ENCODE measurements at regions of chrX and their contacts with region 1.

Region 1: DNA sequence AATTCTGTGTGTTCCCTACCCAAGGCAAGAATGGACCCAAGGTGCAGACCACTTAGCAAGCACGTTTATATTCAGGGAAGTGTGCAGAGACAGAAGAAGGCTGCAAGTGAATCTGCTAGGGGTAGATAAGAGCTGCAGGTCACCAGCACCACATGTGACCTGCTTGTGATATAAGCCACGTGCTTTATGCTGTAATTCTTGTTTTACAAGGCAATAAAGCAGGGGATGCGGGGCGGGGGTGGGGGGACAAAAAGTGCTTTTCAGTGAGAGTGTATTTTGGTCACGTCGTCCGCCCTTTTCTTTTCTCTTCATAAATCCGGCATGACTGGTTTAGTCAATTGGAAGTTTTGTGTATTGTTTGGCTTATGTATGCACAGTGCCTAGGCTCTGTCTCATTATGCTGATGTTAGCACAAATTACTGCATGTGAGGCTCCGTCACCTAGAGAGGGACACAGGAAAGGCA is 192.7 kb downstream of the RBMX2 start:
- DNase-seq: no peak
- ATAC-seq: no peak

Region 2: GRCh38 chrX:130340271-130340670 is 254.2 kb before region 1 on chrX:
- intact Hi-C with region 1: no loop called
- DNase-seq: no peak
- ATAC-seq: no peak

Region 3: DNA sequence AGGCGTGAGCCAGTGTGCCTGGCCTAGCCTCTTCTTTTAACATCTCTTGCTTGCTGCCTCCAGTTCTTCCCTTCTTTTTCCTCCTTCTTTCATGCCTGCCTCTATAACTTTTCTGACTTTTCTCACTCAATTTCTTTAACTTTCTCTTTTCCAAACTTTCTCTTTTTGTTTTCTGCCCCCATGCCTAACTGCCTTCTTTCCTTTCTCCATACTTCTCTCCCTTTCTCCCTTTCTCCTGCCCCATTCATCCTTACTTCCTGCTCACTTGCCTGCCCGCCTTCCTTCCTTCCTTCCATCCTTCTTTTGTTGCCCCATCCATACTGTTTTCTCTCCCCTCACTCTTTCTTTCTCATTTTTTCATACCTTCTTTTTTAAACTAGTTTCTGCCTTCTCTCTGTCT is 87.5 kb before region 1 on chrX:
- intact Hi-C with region 1: no loop called
- DNase-seq: no peak
- ATAC-seq: no peak

Region 4: GRCh38 chrX:130836447-130836846 is 242.0 kb after region 1 on chrX:
- intact Hi-C with region 1: no loop called
- DNase-seq: no peak
- ATAC-seq: no peak

Region 5: GRCh38 chrX:130909469-130910136 is 315.1 kb after region 1 on chrX:
- intact Hi-C with region 1: loop called (anchors 5 kb)
- DNase-seq: no peak
- ATAC-seq: no peak

Measured in Right ventricle myocardium inferior (tissue), 1 donor.